Activated naive CD4-positive, alpha-beta T cell treated with anti-CD3 and anti-CD28 coated beads for 36 hours (primary cell): ENCODE measurements at regions of chr5 and their contacts with region 1.

Region 1: DNA sequence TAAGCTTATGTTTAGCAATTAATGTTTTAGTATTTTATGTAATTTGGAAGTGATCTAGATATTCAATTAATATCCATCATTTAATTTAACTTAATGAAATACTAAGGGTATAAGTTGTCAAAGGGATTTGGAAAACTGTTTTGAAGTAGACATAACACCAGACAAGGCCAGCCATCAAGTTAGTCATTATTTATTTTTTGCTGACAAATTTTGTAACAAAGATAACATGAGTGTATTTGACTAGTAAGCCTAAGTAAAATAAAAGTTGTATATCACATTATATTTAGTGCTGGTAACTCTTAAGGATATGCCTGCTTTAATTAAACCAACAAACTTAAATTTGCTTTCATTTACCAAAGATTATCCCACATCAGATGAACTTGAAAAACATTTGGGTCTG is 125.9 kb upstream of the TNFAIP8 start:
- DNase-seq: no peak
- H3K4me3 Mint-ChIP-seq: no peak overlapping the region
- H3K27ac Mint-ChIP-seq: no peak overlapping the region
- H3K4me1 Mint-ChIP-seq: peaks cover 12% of the 10 kb centered on the region
- H3K27me3 Mint-ChIP-seq: no peaks in the 10 kb centered on the region

Region 2: DNA sequence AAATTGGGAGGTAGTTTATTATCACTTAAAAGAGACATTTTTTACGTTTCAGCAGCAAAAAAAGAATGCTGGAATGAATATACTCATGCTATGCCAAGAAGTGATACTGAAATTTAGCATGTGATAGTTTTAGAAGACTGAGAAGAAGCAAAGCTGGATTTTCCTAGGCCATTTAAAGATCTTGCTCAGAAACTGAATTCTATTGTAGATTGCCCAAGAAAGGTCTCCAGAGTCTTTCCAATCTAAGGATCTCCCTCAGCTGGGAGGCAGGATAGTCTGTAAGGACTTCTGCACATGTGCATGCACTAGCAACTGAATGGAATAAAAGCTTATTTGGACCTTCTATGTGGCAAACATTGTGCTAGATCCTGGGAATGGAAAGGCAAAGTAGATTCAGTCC is 576.1 kb before region 1 on chr5:
- CTCF ChIA-PET with region 1: no interaction called
- intact Hi-C with region 1: no loop called
- DNase-seq: no peak
- H3K4me3 Mint-ChIP-seq: no peak overlapping the region
- H3K27ac Mint-ChIP-seq: no peak overlapping the region
- H3K4me1 Mint-ChIP-seq: no peaks in the 10 kb centered on the region
- H3K27me3 Mint-ChIP-seq: no peaks in the 10 kb centered on the region

Region 3: GRCh38 chr5:118956727-118957126 is 273.2 kb before region 1 on chr5:
- CTCF ChIA-PET with region 1: no interaction called
- intact Hi-C with region 1: no loop called
- DNase-seq: no peak
- H3K4me3 Mint-ChIP-seq: no peak overlapping the region
- H3K27ac Mint-ChIP-seq: no peak overlapping the region
- H3K4me1 Mint-ChIP-seq: no peaks in the 10 kb centered on the region
- H3K27me3 Mint-ChIP-seq: no peaks in the 10 kb centered on the region

Region 4: GRCh38 chr5:119088438-119088837 is 141.5 kb before region 1 on chr5:
- CTCF ChIA-PET with region 1: no interaction called
- intact Hi-C with region 1: loop called (anchors 5 kb)
- DNase-seq: no peak
- H3K4me3 Mint-ChIP-seq: no peak overlapping the region
- H3K27ac Mint-ChIP-seq: no peak overlapping the region
- H3K4me1 Mint-ChIP-seq: peaks cover 22% of the 10 kb centered on the region
- H3K27me3 Mint-ChIP-seq: no peaks in the 10 kb centered on the region